Esophagus muscularis mucosa (tissue), 4 donors: ENCODE measurements at regions of chr5 and their contacts with region 1.

Region 1: GRCh38 chr5:141564216-141564692 is 54.5 kb downstream of the DIAPH1 start:
- DNase-seq: no peak
- H3K4me3 ChIP-seq: no peak overlapping the region
- H3K27ac ChIP-seq: peak overlapping the region; percentile 54 to 69 (median 60)
- H3K4me1 ChIP-seq: peaks cover 20 to 35% (median 24%) of the 10 kb centered on the region in 4 donors
- H3K27me3 ChIP-seq: no peaks in the 10 kb centered on the region
- CTCF ChIP-seq: peak; percentile 92 to 99 (median 98)
- EP300 ChIP-seq: no peak
- POLR2A ChIP-seq: no peak

Region 2: GRCh38 chr5:141223112-141223783 is 341.0 kb before region 1 on chr5 and contains the start of gene PCDHB14:
- intact Hi-C with region 1: loop called (anchors 10 kb)
- DNase-seq: no peak
- H3K4me3 ChIP-seq: peak within 1 kb of the TSS; percentile 27 to 44 (median 37)
- H3K27ac ChIP-seq: peak within 1 kb of the TSS in 1 of 4 donors; percentile 20
- H3K4me1 ChIP-seq: no peaks in the 10 kb centered on the region
- H3K27me3 ChIP-seq: no peaks in the 10 kb centered on the region
- CTCF ChIP-seq: peak in 1 of 3 experiments; percentile 16
- EP300 ChIP-seq: no peak
- POLR2A ChIP-seq: no peak
- total RNA-seq, gene PCDHB14: 6.8 to 9.9 (median 8.3) TPM

Region 3: DNA sequence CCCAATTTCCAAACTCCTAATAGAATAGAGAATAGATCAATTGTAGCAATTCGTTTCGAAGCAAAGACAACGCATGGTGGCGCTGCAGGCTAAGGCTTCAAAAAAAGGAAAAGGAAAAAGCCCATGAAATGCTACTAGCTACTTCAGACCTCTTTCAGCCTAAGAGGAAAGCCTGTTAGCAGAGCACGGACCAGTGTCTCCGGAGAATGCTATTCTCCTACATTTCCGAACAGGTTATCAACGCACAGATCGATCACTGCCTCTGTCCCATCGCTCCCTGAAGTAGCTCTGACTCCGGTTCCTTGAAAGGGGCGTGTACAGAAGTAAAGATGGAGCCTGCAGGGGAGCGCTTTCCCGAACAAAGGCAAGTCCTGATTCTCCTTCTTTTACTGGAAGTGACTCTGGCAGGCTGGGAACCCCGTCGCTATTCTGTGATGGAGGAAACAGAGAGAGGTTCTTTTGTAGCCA is 319.0 kb before region 1 on chr5 and contains the start of gene PCDHB15:
- intact Hi-C with region 1: loop called (anchors 10 kb)
- DNase-seq: no peak
- H3K4me3 ChIP-seq: peak within 1 kb of the TSS; percentile 31 to 49 (median 36)
- H3K27ac ChIP-seq: no peak within 1 kb of the TSS
- H3K4me1 ChIP-seq: no peaks in the 10 kb centered on the region
- H3K27me3 ChIP-seq: peaks cover 0 to 12% (median 0%) of the 10 kb centered on the region in 4 donors
- CTCF ChIP-seq: peak; percentile 11 to 26 (median 23)
- EP300 ChIP-seq: no peak
- POLR2A ChIP-seq: no peak
- total RNA-seq, gene PCDHB15: 4.0 to 7.0 (median 4.5) TPM

Region 4: GRCh38 chr5:141349917-141350619 is 214.2 kb before region 1 on chr5 and contains the start of gene PCDHGB1:
- intact Hi-C with region 1: loop called (anchors 10 kb)
- DNase-seq: no peak
- H3K4me3 ChIP-seq: peak within 1 kb of the TSS; percentile 22 to 37 (median 30)
- H3K27ac ChIP-seq: peak within 1 kb of the TSS in 1 of 4 donors; percentile 27
- H3K4me1 ChIP-seq: no peaks in the 10 kb centered on the region
- H3K27me3 ChIP-seq: peaks cover 0 to 42% (median 3%) of the 10 kb centered on the region in 4 donors
- CTCF ChIP-seq: peak; percentile 26 to 47 (median 31)
- EP300 ChIP-seq: no peak
- POLR2A ChIP-seq: no peak
- total RNA-seq, gene PCDHGB1: 2.7 to 5.1 (median 3.0) TPM